ENCODE measurements at regions of chr16 and their contacts with region 1.

Region 1: GRCh38 chr16:3112058-3112880 is at the start of gene ZNF205:
- DNase-seq: peak; percentile 92
- H3K4me3 ChIP-seq: peak within 1 kb of the TSS; percentile 78 to 96
- H3K27ac ChIP-seq: peak within 1 kb of the TSS in 1 of 2 experiments; percentile 61; a peak in 1 of 4 replicates
- H3K4me1 ChIP-seq: peaks cover 0 to 24% of the 10 kb centered on the region in 2 experiments; a peak in 1 of 4 replicates
- H3K27me3 ChIP-seq: no peaks in the 10 kb centered on the region
- CTCF ChIP-seq: no peak
- EP300 ChIP-seq: no peak
- RAD21 ChIP-seq: no peak
- polyA plus RNA-seq, gene ZNF205: 7.6 and 9.7 TPM in 2 replicates

Region 2: GRCh38 chr16:3099732-3100499 is 12.4 kb before region 1 on chr16:
- CTCF ChIA-PET with region 1: interaction called, 15 read pairs
- POLR2A ChIA-PET with region 1: interaction called, 3 read pairs
- DNase-seq: peak; percentile 98
- H3K4me3 ChIP-seq: no peak overlapping the region
- H3K27ac ChIP-seq: no peak overlapping the region
- H3K4me1 ChIP-seq: peaks cover 9 to 11% of the 10 kb centered on the region in 2 experiments; a peak in 2 of 4 replicates
- H3K27me3 ChIP-seq: no peaks in the 10 kb centered on the region
- CTCF ChIP-seq: no peak
- EP300 ChIP-seq: no peak
- RAD21 ChIP-seq: no peak

Measured in SK-N-SH (cell line).